Aorta (tissue), 5 donors: ENCODE measurements at regions of chr17 and their contacts with region 1.

Region 1: GRCh38 chr17:16521070-16521727 is 29.2 kb upstream of the LRRC75A start:
- DNase-seq: peak in 1 of 2 donors; percentile 79
- ATAC-seq: peak; percentile 91
- H3K4me3 ChIP-seq: no peak overlapping the region
- H3K27ac ChIP-seq: no peak overlapping the region
- H3K4me1 ChIP-seq: no peaks in the 10 kb centered on the region
- H3K27me3 ChIP-seq: no peaks in the 10 kb centered on the region

Region 2: DNA sequence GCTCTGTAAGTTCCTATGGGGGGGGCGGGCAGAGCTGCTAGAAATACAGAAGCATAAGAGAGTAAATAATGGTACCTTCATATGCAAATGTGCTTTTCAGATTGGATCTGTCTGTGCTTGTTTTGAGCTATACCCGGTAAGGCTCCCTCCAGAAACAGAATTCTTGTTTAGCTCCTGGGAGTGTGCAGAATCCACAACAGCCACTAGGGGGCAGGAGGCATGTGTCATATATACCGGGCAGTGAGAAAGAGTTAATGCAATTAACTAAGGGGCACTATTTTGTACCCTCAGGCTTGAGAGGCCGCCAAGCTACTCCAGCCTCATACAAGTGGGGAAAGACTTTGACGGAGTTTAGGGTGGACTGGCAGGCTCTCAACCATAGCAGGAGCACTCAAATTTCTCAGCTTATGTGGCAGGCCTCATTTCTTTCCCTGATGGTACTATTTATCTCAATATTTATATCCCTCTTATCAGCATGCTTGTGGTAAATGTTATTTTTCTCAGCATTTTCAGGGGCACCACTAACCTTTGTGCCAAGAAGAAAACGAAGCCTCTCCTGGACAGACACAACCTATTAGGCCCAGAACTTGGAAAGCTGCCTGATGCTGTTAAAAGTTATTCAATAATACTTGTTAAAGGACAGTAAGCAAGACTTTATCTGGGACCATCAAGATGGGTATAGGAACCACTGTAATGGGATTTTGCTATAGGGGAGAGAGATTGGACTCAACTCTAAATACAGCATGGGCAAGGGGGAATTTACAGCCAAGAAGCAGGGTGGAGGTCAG is 157.3 kb before region 1 on chr17:
- intact Hi-C with region 1: loop called (anchors 2 to 5 kb)
- DNase-seq: peak; percentile 79 to 89
- ATAC-seq: peak; percentile 89
- H3K4me3 ChIP-seq: no peak overlapping the region
- H3K27ac ChIP-seq: no peak overlapping the region
- H3K4me1 ChIP-seq: no peaks in the 10 kb centered on the region
- H3K27me3 ChIP-seq: no peaks in the 10 kb centered on the region

Region 3: GRCh38 chr17:16456742-16457316 is 64.4 kb before region 1 on chr17:
- intact Hi-C with region 1: loop called (anchors 1 kb)
- DNase-seq: no peak
- ATAC-seq: no peak
- H3K4me3 ChIP-seq: no peak overlapping the region
- H3K27ac ChIP-seq: no peak overlapping the region
- H3K4me1 ChIP-seq: no peaks in the 10 kb centered on the region
- H3K27me3 ChIP-seq: no peaks in the 10 kb centered on the region